ENCODE measurements at regions of chr7 and their contacts with region 1.

Region 1: DNA sequence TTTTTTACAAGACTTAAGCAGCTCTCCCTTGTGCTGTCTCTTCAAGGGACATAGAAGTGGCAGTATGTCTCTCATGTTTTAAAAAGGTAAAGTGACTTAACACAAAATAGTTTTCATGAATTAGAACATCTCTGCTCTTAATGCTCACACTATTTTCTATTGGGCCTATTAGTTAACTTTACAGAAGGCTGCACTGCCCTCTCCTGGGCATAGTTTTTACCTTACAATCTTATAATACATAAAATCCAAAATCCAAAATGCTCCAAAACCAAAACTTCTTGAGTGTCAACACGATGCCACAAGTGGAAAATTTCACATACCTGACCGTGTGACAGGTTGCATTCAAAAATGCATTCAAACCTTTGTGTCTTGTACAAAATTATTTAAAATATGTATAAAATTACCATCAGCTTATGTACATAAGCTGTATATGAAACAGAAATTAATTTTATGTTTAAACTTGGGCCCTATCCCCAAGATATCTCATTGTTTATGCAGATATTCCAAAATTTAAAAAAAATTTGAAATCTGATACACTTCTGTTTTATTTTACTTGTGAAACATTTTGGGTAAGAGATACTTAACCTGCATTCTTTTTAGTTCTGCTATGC is 25.8 kb downstream of the TES start:
- DNase-seq: peak in 1 of 2 donors; percentile 51
- H3K4me3 ChIP-seq: no peak overlapping the region
- CTCF ChIP-seq: peak in 1 of 3 donors; percentile 42
- POLR2A ChIP-seq: no peak

Region 2: DNA sequence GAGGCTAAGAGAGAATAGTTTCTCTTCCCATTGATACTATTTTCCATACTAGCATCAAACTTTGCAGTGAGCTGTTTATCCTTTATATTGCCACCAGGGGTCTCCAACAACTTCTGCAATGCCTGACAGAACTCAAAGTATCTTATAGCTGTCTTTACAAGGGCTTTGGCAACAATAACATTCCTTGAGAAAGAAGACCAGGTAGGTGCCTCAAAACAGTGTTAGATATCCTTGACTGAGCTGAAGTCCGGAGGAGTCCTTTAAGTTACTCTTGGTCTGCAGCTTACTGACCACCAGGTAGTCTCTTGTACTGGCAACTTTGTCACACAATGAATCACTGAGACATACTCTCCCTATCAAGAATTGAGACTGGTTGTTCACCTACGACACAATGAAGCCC is 55.8 kb before region 1 on chr7:
- intact Hi-C with region 1: loop called (anchors 5 kb)
- DNase-seq: no peak
- H3K4me3 ChIP-seq: no peak overlapping the region
- CTCF ChIP-seq: peak in 1 of 3 donors; percentile 51
- POLR2A ChIP-seq: no peak

Region 3: DNA sequence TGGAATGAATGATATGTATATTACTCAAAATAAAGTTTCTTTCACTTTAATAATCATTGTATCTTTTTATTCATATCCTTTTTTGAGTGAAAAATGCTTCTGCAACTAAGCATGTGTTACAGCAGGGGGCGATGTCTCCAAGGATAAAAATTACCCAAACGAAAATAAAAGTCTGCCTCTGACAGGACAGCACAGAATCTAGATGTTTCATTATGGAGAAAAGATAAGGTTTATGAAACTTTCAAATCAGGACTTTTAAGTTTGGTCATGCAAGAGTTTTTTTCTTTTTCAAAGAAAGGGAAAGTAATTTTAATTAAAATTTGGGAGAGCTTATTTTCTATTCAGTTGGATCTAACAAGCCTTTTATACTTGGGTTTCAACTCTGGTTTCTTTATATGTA is 22.6 kb after region 1 on chr7:
- intact Hi-C with region 1: no loop called
- DNase-seq: no peak
- H3K4me3 ChIP-seq: no peak overlapping the region
- CTCF ChIP-seq: peak in 1 of 3 donors; percentile 57
- POLR2A ChIP-seq: no peak